Activated T-helper 2 cell treated with anti-CD3 and anti-CD28 coated beads, Interferon-gamma antibody, Interleukin-2, Interleukin-4, amounts not matched to agents 10 μg/mL and 5 μg/mL and 100 μg/mL, durations not matched to agents 14 hours and 24 hours and 36 hours (primary cell): ENCODE measurements at regions of chr2 and their contacts with region 1.

Region 1: GRCh38 chr2:26764078-26764887 is at the start of gene SLC35F6:
- DNase-seq: peak; percentile 77
- H3K4me3 Mint-ChIP-seq: peak within 1 kb of the TSS; percentile 90
- H3K27ac Mint-ChIP-seq: peak within 1 kb of the TSS; percentile 68
- H3K4me1 Mint-ChIP-seq: peaks cover 23% of the 10 kb centered on the region
- H3K27me3 Mint-ChIP-seq: peaks cover 3% of the 10 kb centered on the region
- total RNA-seq, gene SLC35F6: 11.1 and 11.8 TPM in 2 replicates

Region 2: DNA sequence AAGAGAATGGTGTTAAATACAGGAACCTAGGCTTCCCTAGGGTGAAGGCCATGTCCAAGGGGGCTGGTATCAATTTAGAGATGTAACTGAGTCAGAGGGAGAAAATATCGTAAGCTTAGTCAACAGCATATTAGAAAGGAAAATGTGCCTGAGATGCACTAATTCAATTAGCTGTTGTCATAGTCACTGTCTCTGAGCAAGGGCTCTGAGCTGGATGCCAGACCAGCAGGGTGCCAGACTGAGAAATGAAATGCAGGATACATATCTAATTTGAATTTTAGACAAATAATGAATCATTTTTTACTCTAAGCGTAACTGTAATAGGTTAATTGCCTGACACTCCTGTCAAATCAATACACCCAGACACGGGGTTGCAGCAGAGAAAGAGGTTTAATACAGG is 11.6 kb before region 1 on chr2:
- intact Hi-C with region 1: no loop called
- DNase-seq: no peak
- H3K4me3 Mint-ChIP-seq: no peak overlapping the region
- H3K27ac Mint-ChIP-seq: no peak overlapping the region
- H3K4me1 Mint-ChIP-seq: peaks cover 3% of the 10 kb centered on the region
- H3K27me3 Mint-ChIP-seq: peaks cover 3% of the 10 kb centered on the region

Region 3: DNA sequence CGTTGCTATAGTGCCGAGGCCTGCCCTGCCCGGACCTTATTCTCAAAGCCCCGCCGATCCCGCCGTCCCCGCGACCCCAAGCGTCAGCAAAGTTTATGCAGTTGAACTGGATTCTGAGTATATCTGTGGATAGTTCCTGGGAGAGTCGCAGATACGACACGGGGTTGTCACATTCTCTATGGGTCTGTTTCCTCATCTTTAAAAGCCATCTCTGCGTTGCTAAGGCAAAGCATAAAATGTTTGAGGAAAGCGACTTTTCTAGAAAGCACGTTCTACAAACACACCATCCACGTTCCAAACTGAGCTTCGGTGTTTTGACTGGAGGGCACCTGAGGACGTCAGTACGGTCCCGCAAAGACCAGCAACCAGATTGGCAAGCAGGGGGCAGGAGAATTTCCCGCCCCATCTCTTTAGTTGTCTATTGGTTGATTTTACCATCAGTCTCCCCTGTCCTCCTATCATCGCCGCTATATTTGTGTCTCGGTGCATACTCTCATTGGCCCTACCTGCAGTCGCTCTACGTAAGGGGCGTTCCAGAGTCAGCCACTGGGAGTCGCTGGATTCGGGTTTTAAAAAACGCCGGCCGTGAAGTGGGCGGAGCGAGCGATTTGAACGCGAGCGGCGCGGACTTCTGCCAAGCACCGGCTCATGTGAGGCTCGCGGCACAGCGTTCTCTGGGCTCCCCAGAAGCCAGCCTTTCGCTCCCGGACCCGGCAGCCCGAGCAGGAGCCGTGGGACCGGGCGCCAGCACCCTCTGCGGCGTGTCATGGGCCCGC is 21.3 kb after region 1 on chr2 and contains the start of gene CENPA:
- intact Hi-C with region 1: loop called (anchors 1 kb)
- DNase-seq: peak; percentile 94
- H3K4me3 Mint-ChIP-seq: peak within 1 kb of the TSS; percentile 93
- H3K27ac Mint-ChIP-seq: peak within 1 kb of the TSS; percentile 81
- H3K4me1 Mint-ChIP-seq: peaks cover 32% of the 10 kb centered on the region
- H3K27me3 Mint-ChIP-seq: no peaks in the 10 kb centered on the region
- total RNA-seq, gene CENPA: 24.3 and 27.3 TPM in 2 replicates